ENCODE measurements at regions of chr15 and their contacts with region 1.

Region 1: GRCh38 chr15:66774001-66774814 is 72.2 kb downstream of the SMAD6 start:
- DNase-seq: peak; percentile 80
- CTCF ChIP-seq: peak; percentile 58

Region 2: DNA sequence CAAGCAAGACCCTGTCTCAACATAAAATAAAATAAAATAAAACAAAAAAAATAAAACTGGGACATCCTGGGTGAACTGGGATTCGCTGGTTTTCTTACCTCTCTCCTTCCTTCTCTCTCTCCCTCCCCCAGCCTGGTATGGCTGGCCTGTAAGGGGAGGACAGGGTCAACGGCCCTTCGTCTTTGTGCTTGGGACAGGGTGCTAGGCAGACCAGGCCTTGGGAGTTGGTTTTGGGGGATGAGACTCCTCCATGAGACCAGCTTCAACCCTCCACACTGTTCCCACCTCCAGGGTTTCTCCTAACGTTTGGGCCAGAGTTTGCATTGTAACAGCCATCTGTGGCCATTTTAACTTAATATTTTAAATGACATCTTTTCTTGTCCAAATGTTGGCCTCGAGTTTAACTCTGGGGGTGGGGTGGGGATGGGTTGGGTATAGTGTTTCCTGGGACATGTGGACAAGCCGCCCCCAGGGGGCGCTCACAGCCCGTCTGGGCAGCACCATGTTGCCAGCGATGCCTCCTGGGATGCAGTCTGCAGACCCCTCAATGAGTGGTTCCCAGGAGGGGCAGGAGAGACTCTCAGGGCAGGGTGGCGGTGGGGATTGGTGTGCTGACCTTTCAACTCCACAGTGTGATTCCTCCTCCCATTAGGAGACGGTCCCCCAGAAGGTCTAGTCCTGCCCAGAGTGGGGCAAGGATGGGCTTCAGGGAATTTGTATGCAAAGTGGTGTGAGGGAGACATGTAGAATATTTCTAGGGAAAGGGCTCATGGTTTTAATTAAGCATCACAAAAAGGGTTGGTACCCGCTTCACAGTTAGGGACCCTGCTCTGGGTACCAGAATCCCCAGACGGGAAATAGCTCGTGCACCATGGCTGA is 170.7 kb before region 1 on chr15:
- CTCF ChIA-PET with region 1: interaction called, 27 read pairs
- POLR2A ChIA-PET with region 1: no interaction called
- DNase-seq: peak; percentile 79
- CTCF ChIP-seq: peak; percentile 65

Region 3: DNA sequence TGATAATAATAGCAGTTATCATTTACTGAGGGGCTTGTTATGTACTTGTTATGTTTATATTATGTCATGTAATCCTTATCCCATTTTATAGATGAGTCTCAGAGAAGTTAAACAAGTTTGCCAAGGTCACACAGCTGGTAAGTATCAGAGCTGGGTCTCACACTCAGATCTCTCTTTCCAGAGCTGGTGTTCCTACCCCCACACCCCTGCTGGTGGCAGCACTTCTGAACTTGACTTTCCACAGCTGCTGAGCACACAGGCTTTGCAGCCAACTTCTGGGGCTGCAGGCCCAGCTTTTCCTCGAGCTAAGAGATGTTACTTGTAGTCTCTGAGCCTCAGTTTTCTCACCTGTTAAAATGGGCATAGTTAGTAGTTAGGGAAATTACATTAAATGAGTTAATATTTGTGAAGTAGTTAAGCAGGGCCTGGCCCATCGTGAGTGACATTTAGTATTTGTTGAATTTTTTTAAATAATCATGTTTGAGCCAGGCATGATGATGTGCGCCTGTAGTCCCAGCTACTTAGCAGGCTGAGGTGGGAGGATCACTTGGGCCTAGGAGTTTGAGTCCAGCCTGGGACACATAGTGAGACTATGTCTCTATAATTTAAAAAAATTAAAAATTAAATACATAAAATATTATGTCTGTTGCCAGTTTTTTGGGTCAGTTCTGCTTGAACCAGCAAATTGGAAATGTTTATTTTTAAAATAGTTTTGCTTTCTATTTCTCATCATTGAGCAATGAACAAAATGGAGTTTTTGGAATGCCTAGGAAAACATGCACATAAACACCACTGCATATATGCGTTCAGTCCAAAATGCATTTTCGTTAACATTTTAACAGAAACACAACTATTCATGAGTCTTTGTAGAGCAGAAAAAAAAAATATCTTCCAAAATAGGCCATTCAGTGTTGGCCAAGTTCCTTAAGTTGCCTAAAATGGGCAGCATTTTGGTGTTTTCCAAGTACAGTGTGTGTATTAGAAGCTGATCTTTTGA is 15.1 kb after region 1 on chr15:
- CTCF ChIA-PET with region 1: no interaction called
- POLR2A ChIA-PET with region 1: no interaction called
- DNase-seq: no peak
- CTCF ChIP-seq: peak; percentile 15

Region 4: DNA sequence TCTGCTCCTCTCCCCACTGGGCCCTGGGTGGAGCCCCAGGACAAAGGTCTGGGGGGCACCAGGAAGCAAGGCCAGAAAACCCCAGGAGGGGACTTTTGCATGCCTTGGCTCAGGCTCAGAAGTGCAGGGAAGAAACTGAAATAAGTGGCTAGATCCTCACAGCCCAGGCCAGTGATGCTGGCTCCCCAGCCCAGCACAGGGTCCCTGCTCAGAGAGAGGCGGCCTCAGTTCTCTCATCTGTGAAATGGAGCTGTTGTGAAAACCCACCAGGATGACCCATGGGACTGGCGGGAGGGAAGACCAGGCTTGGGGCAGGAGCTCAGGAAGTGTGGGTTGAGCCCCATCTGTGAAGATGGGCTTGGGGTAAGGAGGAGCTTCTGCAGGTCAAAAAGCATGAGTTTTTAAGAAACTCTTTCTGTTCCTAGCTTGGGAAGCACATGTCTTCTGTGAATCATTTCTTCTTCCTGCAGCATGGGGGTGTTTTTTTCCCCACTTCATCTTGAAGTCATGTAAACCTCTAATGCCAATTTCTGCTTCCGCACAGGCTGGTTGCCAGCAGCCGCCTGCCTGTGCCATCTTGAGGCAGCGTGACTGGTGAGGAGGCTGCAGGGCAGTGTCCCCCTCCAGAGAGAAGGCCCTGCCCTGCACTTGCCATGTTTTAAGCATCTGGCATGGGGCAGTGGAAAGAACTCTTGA is 46.4 kb after region 1 on chr15:
- CTCF ChIA-PET with region 1: no interaction called
- POLR2A ChIA-PET with region 1: no interaction called
- DNase-seq: no peak
- CTCF ChIP-seq: no peak